Heart left ventricle (tissue), 16 donors: ENCODE measurements at regions of chr12 and their contacts with region 1.

Region 1: DNA sequence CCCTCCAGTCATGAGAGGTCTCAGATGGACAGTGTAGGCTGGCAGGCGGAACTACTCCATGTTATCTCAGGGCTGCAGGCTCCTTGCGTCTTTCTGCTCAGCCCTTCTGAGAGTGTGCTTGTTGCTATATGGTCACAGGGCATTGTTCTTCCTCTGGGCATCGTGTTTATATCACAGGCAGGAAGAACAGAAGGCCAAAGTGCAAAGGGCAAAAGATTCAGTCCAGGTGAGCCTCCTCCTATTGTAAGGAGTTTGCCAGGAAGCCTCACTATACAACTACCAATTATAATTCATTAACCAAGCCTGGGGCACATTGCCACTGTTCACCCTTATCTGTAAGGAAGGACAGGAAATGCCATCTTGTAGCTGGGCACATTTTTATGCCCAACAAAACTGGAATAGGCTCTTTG is 195.5 kb upstream of the KITLG start:
- DNase-seq: no peak
- ATAC-seq: no peak
- H3K4me3 ChIP-seq: no peak overlapping the region
- H3K27ac ChIP-seq: no peak overlapping the region
- H3K4me1 ChIP-seq: no peaks in the 10 kb centered on the region
- H3K27me3 ChIP-seq: no peaks in the 10 kb centered on the region
- CTCF ChIP-seq: no peak
- POLR2A ChIP-seq: no peak

Region 2: DNA sequence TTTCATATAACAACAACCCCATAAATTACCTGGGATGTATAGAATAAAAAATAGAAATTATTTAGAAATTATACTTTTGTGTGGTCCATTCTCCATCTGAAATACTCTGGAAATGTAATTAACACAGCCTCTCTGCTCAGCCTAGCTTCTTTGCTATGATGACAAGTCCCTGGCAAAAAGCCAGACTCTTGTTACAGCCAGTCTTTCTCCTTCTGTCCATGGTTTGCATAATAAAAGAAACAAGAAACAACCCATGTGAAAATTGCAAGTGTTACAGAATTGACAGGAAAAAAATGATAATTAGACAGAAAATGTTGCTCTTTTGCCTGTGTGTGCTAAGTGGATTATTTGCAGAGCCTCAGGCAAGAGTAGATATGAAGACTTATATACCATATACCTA is 807.9 kb before region 1 on chr12:
- intact Hi-C with region 1: no loop called
- DNase-seq: no peak
- ATAC-seq: no peak
- H3K4me3 ChIP-seq: no peak overlapping the region
- H3K27ac ChIP-seq: no peak overlapping the region
- H3K4me1 ChIP-seq: no peaks in the 10 kb centered on the region
- H3K27me3 ChIP-seq: no peaks in the 10 kb centered on the region
- CTCF ChIP-seq: no peak
- POLR2A ChIP-seq: no peak

Region 3: DNA sequence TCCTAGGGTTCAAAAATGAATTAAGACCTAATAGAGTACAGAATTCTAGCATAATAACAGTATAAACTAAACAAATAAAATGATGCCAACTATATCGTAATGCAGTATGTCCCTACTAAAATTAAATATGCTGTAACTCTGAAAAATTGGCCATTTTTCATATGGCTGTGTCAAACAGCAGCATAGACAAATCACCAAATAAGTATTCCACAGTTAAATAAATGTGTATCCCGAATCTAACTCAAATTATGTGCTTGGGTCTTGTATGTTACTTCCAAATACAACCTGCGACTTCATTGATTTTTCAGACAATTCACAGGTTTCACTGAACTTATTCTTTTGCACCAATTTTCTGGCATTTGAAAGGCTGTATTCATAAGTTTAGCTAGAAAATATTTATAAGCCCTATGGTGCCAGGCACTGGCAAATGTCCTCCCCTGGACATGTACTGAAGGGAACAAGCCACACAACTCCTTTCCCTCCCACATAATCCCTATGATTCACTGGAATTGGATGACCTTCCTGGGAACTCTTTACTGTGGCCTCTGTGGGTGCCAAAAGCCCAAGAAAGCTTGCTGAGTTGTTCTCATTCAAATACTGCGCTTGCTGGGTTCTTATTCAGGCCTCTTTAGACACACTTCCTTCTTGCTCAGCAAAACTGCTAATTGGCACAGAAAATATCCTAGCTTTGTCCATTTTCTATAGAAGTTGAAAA is 304.3 kb before region 1 on chr12:
- intact Hi-C with region 1: loop called in 1 of 10 experiments (anchors 5 kb)
- DNase-seq: peak in 1 of 5 donors; percentile 32
- ATAC-seq: peak in 2 of 4 donors; percentile 74 to 87
- H3K4me3 ChIP-seq: no peak overlapping the region
- H3K27ac ChIP-seq: no peak overlapping the region
- H3K4me1 ChIP-seq: peaks cover 0 to 8% (median 0%) of the 10 kb centered on the region in 12 donors
- H3K27me3 ChIP-seq: no peaks in the 10 kb centered on the region
- CTCF ChIP-seq: no peak
- POLR2A ChIP-seq: no peak